Activated naive CD4-positive, alpha-beta T cell treated with anti-CD3 and anti-CD28 coated beads for 36 hours (primary cell): ENCODE measurements at regions of chr4 and their contacts with region 1.

Region 1: GRCh38 chr4:185425647-185426352 is at the start of gene UFSP2:
- DNase-seq: peak; percentile 86
- H3K4me3 Mint-ChIP-seq: peak within 1 kb of the TSS; percentile 76
- H3K27ac Mint-ChIP-seq: peak within 1 kb of the TSS; percentile 96
- H3K4me1 Mint-ChIP-seq: peaks cover 28% of the 10 kb centered on the region
- H3K27me3 Mint-ChIP-seq: peaks cover 1% of the 10 kb centered on the region
- total RNA-seq, gene UFSP2: 24.4 to 30.7 TPM

Region 2: GRCh38 chr4:185142912-185143595 is 282.7 kb before region 1 on chr4 and contains the start of gene SLC25A4:
- CTCF ChIA-PET with region 1: no interaction called
- intact Hi-C with region 1: loop called (anchors 1 kb)
- DNase-seq: peak; percentile 87
- H3K4me3 Mint-ChIP-seq: peak within 1 kb of the TSS; percentile 83
- H3K27ac Mint-ChIP-seq: no peak within 1 kb of the TSS
- H3K4me1 Mint-ChIP-seq: peaks cover 13% of the 10 kb centered on the region
- H3K27me3 Mint-ChIP-seq: peaks cover 11% of the 10 kb centered on the region
- total RNA-seq, gene SLC25A4: 4.3 to 5.0 TPM

Region 3: GRCh38 chr4:185203486-185204237 is 222.1 kb before region 1 on chr4 and contains the start of gene CFAP97:
- CTCF ChIA-PET with region 1: no interaction called
- intact Hi-C with region 1: loop called (anchors 1 kb)
- DNase-seq: peak; percentile 73
- H3K4me3 Mint-ChIP-seq: peak within 1 kb of the TSS; percentile 96
- H3K27ac Mint-ChIP-seq: peak within 1 kb of the TSS; percentile 96
- H3K4me1 Mint-ChIP-seq: peaks cover 32% of the 10 kb centered on the region
- H3K27me3 Mint-ChIP-seq: no peaks in the 10 kb centered on the region
- total RNA-seq, gene CFAP97: 38.4 to 43.6 TPM

Region 4: DNA sequence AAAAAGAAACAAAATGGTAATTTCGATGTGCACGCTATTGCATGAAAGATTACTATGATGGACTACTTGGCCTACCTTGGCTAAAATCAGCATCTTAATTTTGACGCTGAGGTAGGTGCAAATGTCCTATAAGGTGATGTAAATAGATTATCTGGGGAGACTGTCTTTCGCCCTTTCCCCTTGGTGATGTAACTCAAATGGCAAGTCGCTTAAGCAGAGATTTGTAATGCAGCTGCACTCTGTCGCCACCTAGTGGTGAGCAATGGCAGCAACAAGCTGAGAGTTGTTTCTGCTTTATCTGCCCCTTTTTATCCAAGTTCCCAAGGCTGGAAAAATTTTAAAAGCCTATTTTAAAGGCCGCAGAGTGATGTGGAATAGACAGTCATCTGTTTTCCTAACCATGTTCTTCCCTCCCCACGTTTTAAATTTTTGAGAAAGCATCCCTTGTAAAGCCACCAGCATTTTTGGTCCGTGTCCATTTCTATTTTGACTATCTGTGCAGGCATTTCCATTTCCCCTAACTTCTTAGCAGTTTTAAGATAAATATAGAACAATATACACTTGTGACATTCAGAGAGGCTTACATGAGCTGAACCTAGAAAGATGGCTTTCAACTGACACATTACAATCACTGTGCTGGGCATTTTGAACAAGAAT is 171.9 kb after region 1 on chr4:
- CTCF ChIA-PET with region 1: interaction called, 6 read pairs
- intact Hi-C with region 1: loop called (anchors 1 kb)
- DNase-seq: peak; percentile 84
- H3K4me3 Mint-ChIP-seq: no peak overlapping the region
- H3K27ac Mint-ChIP-seq: no peak overlapping the region
- H3K4me1 Mint-ChIP-seq: no peaks in the 10 kb centered on the region
- H3K27me3 Mint-ChIP-seq: peaks cover 13% of the 10 kb centered on the region